GM10248 (cell line): ENCODE measurements at regions of chr12 and their contacts with region 1.

Region 1: DNA sequence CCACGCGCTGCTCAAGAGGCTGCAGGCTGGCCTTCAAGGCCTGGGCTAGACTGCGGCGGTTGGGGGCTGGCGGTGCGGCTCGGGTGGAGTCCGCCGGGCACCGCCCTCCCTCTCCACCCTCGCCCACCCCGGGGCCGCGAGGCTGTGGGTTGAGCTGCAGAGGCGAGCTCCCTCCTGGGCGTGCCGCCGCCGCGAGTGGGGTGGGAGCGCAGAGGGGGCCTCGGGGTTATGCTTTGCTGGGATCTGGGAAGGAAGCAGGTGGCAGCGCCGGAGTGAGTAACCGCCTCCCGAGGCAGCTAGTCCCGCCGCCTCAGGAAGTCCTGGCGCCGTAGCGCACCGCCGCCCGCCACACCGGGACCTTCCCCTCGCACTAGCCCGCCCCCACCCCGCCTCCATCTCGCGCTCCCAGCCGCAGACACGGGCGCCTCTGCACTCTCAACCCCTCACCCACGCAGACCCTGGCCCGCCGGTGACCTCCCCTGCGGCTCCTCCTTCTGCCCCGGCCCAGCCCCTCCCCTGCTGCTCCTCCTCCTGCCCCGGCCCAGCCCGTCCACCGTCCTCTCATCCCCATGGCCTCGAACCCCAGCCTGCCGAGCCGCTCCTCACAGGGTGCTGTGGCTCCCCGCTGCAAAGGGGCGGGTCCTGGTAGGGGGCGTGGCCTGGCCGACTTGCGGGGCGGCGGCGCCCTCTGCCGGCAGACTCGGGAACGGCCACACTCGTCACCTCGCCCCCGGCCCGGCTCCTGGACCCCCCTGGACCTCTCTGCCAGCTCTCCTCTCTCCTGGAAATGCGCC is 16.6 kb downstream of the TAMALIN start:
- DNase-seq: peak; percentile 92
- CTCF ChIP-seq: peak; percentile 89

Region 2: DNA sequence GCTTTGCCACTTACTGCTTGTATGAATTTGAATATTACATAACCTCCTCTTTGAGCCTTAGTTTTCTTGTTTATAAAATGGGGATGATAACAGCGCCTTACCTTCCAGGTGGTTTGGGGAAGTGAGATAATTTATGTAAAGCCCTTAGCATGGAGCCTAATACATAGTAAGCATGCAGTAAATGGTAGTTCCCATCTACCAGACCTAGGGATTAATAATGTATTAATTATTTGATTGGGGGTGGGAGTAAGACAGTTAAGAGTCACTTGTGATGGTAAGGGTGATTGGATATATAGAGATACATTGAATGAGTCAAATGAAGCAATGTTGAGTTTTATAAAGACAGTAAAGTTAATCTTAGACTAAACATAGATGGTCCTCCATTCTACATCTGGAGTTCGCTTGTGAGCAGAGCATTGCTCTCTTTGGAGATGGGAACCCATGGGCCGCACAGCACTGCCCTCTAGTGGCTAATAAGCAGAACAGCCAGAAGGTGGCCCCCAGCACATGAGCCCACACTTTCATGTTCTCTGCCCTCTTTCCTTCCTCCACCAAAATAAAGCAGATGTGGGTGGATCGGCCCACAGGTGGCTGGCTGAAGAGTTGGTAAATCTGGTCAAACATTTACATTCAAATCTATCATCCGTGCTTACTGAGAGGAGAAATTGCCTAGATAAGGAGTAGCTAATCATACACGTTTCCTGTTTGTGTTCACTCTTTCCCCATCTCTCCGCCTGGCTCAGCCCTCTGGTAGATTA is 43.1 kb before region 1 on chr12:
- CTCF ChIA-PET with region 1: interaction called, 30 read pairs
- POLR2A ChIA-PET with region 1: no interaction called
- DNase-seq: peak; percentile 86
- CTCF ChIP-seq: peak; percentile 96

Region 3: GRCh38 chr12:52093346-52093745 is 70.0 kb after region 1 on chr12:
- CTCF ChIA-PET with region 1: interaction called, 1,220 read pairs
- POLR2A ChIA-PET with region 1: no interaction called
- DNase-seq: no peak
- CTCF ChIP-seq: no peak

Region 4: GRCh38 chr12:52137706-52138105 is 114.3 kb after region 1 on chr12:
- CTCF ChIA-PET with region 1: interaction called, 10 read pairs
- POLR2A ChIA-PET with region 1: no interaction called
- DNase-seq: no peak
- CTCF ChIP-seq: no peak

Region 5: GRCh38 chr12:52582971-52583456 is 559.6 kb after region 1 on chr12:
- CTCF ChIA-PET with region 1: no interaction called
- POLR2A ChIA-PET with region 1: no interaction called
- DNase-seq: peak; percentile 71
- CTCF ChIP-seq: peak; percentile 61